PC-9 (cell line): ENCODE measurements at regions of chr9 and their contacts with region 1.

Region 1: DNA sequence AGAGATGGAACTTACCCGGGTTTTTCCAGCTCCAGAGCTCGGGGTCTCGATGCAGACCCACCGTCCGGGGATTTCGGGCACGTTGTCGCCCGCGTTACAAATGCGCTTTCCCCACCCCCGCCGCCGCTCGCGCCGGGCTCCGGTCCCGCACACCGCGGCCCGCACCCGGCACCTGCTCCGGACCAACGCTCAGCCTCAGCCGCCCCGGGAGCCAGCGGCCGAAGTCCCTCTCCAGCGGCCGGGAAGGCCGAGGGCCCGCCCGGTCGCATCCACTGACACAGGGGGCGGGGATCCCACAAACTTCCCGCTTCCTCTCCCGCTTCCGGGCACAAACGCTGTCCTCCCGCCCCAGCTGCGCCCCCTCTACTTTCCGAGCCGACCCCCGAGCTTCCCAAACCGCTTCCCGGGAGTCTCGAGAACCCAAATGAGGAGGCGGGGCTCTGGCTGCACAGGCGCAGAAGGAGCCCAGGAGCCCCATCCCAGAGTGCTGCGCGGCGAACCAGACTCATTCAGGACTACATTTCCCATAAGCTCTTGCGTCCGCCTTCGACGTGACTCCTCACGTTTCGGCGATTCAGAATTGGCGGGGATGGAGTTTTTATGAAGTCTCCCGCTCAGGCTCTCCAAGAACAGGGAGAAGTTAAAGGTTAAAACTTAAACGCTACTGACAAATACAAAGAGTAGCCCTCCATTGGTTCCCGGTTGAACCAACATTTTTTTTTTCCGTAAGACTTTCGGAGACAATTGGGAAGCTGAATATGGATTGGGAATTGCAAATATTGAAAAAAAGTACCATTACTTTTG is at the start of gene ZNF782:
- DNase-seq: peak; percentile 85 to 92
- H3K4me3 ChIP-seq: peak within 1 kb of the TSS; percentile 94
- H3K27ac ChIP-seq: no peak within 1 kb of the TSS
- H3K4me1 ChIP-seq: peaks cover 37% of the 10 kb centered on the region
- H3K27me3 ChIP-seq: no peaks in the 10 kb centered on the region
- CTCF ChIP-seq: no peak
- total RNA-seq, gene ZNF782: 7.2 and 11.5 TPM in 2 replicates

Region 2: DNA sequence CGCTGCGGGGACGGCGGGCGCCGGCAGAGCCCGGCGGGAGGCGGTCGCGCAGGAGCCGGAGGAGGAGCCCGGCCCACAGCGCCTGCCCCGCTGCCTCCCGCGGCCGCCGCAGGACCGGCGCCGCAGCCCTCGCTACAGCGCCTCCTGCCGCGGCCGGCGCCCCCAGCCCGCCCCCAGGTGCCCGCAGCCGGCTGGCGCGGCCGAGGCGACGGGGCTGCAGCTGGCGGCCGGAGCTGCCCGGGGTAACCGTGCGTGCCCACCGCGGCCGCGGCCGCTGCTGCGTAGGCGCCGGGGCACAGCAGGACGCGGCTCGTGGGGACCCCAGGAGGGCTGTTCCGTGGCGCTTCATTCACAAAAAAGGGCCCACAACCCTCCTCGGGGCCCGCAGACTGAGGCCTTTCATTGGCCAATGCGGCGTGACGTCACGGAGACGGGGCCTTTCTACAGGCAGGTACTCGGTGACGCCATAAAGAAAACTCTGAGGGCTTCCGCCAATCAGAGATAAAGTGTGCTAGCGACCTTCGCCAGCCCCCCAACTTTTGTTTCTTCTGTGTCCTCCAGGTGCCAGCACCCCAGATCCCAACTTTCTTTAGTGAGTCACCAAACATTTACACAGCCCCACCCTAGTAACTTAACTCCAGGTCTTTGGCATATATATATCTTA is 234.7 kb before region 1 on chr9 and contains the start of gene CDC14B:
- CTCF ChIA-PET with region 1: no interaction called
- POLR2A ChIA-PET with region 1: no interaction called
- intact Hi-C with region 1: loop called (anchors 2 kb)
- DNase-seq: peak; percentile 96 to 98
- H3K4me3 ChIP-seq: peak within 1 kb of the TSS; percentile 88
- H3K27ac ChIP-seq: peak within 1 kb of the TSS; percentile 67
- H3K4me1 ChIP-seq: peaks cover 36% of the 10 kb centered on the region
- H3K27me3 ChIP-seq: no peaks in the 10 kb centered on the region
- CTCF ChIP-seq: no peak
- total RNA-seq, gene CDC14B: 43.3 and 47.2 TPM in 2 replicates

Region 3: GRCh38 chr9:96818535-96818934 is 35.7 kb before region 1 on chr9:
- CTCF ChIA-PET with region 1: no interaction called
- POLR2A ChIA-PET with region 1: no interaction called
- intact Hi-C with region 1: loop called (anchors 5 kb)
- DNase-seq: no peak
- H3K4me3 ChIP-seq: no peak overlapping the region
- H3K27ac ChIP-seq: no peak overlapping the region
- H3K4me1 ChIP-seq: no peaks in the 10 kb centered on the region
- H3K27me3 ChIP-seq: no peaks in the 10 kb centered on the region
- CTCF ChIP-seq: no peak

Region 4: GRCh38 chr9:96844040-96844439 is 10.2 kb before region 1 on chr9:
- CTCF ChIA-PET with region 1: no interaction called
- POLR2A ChIA-PET with region 1: no interaction called
- intact Hi-C with region 1: no loop called
- DNase-seq: no peak
- H3K4me3 ChIP-seq: no peak overlapping the region
- H3K27ac ChIP-seq: no peak overlapping the region
- H3K4me1 ChIP-seq: no peaks in the 10 kb centered on the region
- H3K27me3 ChIP-seq: no peaks in the 10 kb centered on the region
- CTCF ChIP-seq: no peak

Region 5: DNA sequence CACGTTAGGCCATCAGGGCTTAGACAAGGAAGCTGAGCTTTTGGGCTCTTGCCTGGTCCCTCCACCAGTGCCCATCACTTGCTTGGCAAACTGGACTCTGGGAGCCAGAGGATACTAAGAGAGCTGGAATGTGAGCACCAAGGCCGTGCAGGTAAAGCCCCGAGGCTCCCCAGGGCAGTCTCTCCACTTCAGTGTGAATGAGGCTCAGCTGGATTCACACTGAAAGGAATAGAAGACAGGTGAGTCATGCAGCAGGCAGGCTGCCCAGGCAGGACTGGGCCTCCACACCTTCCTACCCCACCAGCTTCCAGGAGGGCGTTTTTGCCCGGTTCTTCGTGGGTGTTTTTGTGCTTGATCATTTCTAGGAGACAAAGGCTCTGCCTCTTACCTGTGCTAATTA is 191.9 kb after region 1 on chr9:
- CTCF ChIA-PET with region 1: interaction called, 5 read pairs
- POLR2A ChIA-PET with region 1: interaction called, 5 read pairs
- intact Hi-C with region 1: loop called (anchors 1 kb)
- DNase-seq: peak; percentile 98 to 99
- H3K4me3 ChIP-seq: peak overlapping the region; percentile 1; the same call in 1 of the 2 replicates
- H3K27ac ChIP-seq: peak overlapping the region; percentile 83
- H3K4me1 ChIP-seq: peaks cover 43% of the 10 kb centered on the region
- H3K27me3 ChIP-seq: no peaks in the 10 kb centered on the region
- CTCF ChIP-seq: no peak

Region 6: GRCh38 chr9:97220894-97221477 is 366.7 kb after region 1 on chr9:
- CTCF ChIA-PET with region 1: interaction called, 9 read pairs
- POLR2A ChIA-PET with region 1: interaction called, 5 read pairs
- intact Hi-C with region 1: loop called (anchors 2 kb)
- DNase-seq: no peak
- H3K4me3 ChIP-seq: no peak overlapping the region; the same call in 1 of the 2 replicates
- H3K27ac ChIP-seq: no peak overlapping the region
- H3K4me1 ChIP-seq: no peaks in the 10 kb centered on the region
- H3K27me3 ChIP-seq: no peaks in the 10 kb centered on the region
- CTCF ChIP-seq: no peak

Region 7: GRCh38 chr9:97411789-97412625 is 557.7 kb after region 1 on chr9 and contains the start of gene TDRD7:
- CTCF ChIA-PET with region 1: no interaction called
- POLR2A ChIA-PET with region 1: no interaction called
- intact Hi-C with region 1: loop called (anchors 5 kb)
- DNase-seq: peak; percentile 56 to 88
- H3K4me3 ChIP-seq: peak within 1 kb of the TSS; percentile 89
- H3K27ac ChIP-seq: no peak within 1 kb of the TSS
- H3K4me1 ChIP-seq: peaks cover 8% of the 10 kb centered on the region
- H3K27me3 ChIP-seq: peaks cover 10% of the 10 kb centered on the region; the same call in 1 of the 2 replicates
- CTCF ChIP-seq: peak; percentile 80
- total RNA-seq, gene TDRD7: 11.9 and 14.2 TPM in 2 replicates

Region 8: DNA sequence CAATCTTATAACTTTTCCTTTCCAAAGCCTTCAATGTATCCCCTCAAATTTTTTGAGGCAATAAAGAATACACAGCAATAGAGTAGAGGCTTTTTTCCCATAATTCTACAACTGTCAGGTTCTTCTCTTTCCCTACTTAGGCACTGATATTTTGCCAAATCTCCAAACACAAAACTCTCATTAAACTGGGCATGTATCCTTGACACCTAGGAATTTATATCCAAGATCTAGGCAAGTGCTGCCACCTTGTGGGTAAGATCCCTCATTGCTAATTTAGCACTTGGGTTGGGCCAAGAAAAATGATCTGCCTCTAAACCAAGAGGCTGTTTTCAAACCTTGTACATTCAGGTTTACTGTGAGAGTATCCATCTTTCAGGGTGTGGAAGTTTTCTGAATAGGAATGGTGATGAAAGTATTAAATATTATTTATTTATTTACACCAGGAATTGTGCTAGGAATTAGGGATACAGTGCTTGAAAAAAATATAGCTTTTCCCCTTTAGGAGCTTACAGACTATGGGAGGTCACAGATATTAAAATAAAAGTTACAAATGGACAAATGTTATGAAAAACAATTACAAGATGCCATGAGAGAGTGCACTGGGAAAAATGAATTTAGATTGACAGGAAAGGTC is 761.3 kb after region 1 on chr9:
- CTCF ChIA-PET with region 1: interaction called, 5 read pairs
- POLR2A ChIA-PET with region 1: no interaction called
- intact Hi-C with region 1: loop called (anchors 5 kb)
- DNase-seq: peak; percentile 60 to 62
- H3K4me3 ChIP-seq: no peak overlapping the region
- H3K27ac ChIP-seq: no peak overlapping the region
- H3K4me1 ChIP-seq: no peaks in the 10 kb centered on the region
- H3K27me3 ChIP-seq: no peaks in the 10 kb centered on the region
- CTCF ChIP-seq: peak; percentile 91